Dendritic cell treated with granulocyte-macrophage colony-stimulating factor and Interleukin-4, amounts not matched to agents 40 ng/mL and 50 ng/mL, for 4 days (primary cell): ENCODE measurements at regions of chr3 and their contacts with region 1.

Region 1: GRCh38 chr3:123618768-123619484 is 34.1 kb upstream of the HACD2 start:
- H3K4me3 Mint-ChIP-seq: peak overlapping the region; percentile 68
- H3K27ac Mint-ChIP-seq: peak overlapping the region; percentile 72
- H3K4me1 Mint-ChIP-seq: peaks cover 54% of the 10 kb centered on the region
- H3K27me3 Mint-ChIP-seq: no peaks in the 10 kb centered on the region

Region 2: GRCh38 chr3:123571264-123571972 is 47.5 kb before region 1 on chr3:
- intact Hi-C with region 1: loop called (anchors 5 kb)
- H3K4me3 Mint-ChIP-seq: no peak overlapping the region
- H3K27ac Mint-ChIP-seq: no peak overlapping the region
- H3K4me1 Mint-ChIP-seq: peaks cover 54% of the 10 kb centered on the region
- H3K27me3 Mint-ChIP-seq: no peaks in the 10 kb centered on the region

Region 3: GRCh38 chr3:123584988-123585937 is 33.7 kb before region 1 on chr3 and contains the start of gene HACD2:
- intact Hi-C with region 1: loop called (anchors 2 kb)
- H3K4me3 Mint-ChIP-seq: no peak within 1 kb of the TSS
- H3K27ac Mint-ChIP-seq: no peak within 1 kb of the TSS
- H3K4me1 Mint-ChIP-seq: peaks cover 16% of the 10 kb centered on the region
- H3K27me3 Mint-ChIP-seq: no peaks in the 10 kb centered on the region